CD4-positive, alpha-beta memory T cell (primary cell): ENCODE measurements at regions of chr5 and their contacts with region 1.

Region 1: DNA sequence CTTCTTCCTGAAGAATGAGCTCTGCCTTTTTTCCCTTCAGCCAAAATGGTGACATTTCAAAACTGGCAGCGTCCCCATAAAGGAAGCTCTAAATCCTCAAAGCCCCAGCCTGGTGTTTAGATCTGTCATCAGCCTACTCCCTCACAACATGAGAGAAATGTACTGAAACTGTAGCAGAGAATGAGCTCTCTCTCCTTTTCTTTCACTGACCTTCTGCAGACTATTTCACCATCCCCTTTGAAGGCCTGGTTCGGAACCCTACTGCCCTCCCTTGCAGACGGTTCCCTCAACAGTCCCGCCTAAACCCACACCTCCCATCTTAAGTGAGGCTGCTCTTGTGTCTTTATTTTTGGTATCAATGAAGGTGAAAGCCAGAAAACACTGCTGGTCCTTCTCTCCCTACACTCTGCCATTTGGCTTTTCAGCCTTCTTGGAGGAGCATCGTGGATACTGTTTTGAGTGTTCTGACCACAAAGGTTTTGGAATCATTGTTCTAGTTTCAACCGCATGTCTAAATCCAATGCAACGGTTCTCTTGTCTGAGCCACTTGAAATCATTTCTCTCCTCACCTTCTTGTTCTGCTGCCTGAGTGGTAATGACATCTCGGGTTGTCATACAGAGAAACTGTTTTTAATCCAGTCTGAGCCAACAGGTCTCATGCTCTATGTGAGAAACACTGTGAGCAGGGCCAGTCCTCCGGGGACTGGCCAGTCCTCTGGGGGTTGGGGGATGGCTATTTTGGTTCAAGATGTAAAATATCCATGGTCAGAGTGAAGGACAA is 39.0 kb downstream of the ITK start:
- DNase-seq: no peak
- H3K4me3 ChIP-seq: no peak overlapping the region
- H3K4me3 Mint-ChIP-seq: peak overlapping the region in 7 of 8 donors; percentile 57 to 76 (median 67)
- H3K27ac ChIP-seq: peak overlapping the region; percentile 44
- H3K27ac Mint-ChIP-seq: peak overlapping the region; percentile 87 to 96 (median 93)
- H3K4me1 ChIP-seq: peaks cover 98% of the 10 kb centered on the region
- H3K4me1 Mint-ChIP-seq: peaks cover 71 to 85% (median 81%) of the 10 kb centered on the region in 4 donors
- H3K27me3 ChIP-seq: no peaks in the 10 kb centered on the region
- H3K27me3 Mint-ChIP-seq: no peaks in the 10 kb centered on the region

Region 2: GRCh38 chr5:157159209-157159751 is 60.4 kb before region 1 on chr5:
- CTCF ChIA-PET with region 1: no interaction called
- POLR2A ChIA-PET with region 1: interaction called, 12 read pairs
- intact Hi-C with region 1: no loop called
- DNase-seq: peak; percentile 74 to 87 (median 81)
- H3K4me3 ChIP-seq: peak overlapping the region in 1 of 2 donors; percentile 31
- H3K4me3 Mint-ChIP-seq: peak overlapping the region in 7 of 8 donors; percentile 51 to 75 (median 65)
- H3K27ac ChIP-seq: peak overlapping the region; percentile 88
- H3K27ac Mint-ChIP-seq: peak overlapping the region; percentile 91 to 99 (median 98)
- H3K4me1 ChIP-seq: peaks cover 74% of the 10 kb centered on the region
- H3K4me1 Mint-ChIP-seq: peaks cover 57 to 91% (median 73%) of the 10 kb centered on the region in 4 donors
- H3K27me3 ChIP-seq: no peaks in the 10 kb centered on the region
- H3K27me3 Mint-ChIP-seq: no peaks in the 10 kb centered on the region

Region 3: DNA sequence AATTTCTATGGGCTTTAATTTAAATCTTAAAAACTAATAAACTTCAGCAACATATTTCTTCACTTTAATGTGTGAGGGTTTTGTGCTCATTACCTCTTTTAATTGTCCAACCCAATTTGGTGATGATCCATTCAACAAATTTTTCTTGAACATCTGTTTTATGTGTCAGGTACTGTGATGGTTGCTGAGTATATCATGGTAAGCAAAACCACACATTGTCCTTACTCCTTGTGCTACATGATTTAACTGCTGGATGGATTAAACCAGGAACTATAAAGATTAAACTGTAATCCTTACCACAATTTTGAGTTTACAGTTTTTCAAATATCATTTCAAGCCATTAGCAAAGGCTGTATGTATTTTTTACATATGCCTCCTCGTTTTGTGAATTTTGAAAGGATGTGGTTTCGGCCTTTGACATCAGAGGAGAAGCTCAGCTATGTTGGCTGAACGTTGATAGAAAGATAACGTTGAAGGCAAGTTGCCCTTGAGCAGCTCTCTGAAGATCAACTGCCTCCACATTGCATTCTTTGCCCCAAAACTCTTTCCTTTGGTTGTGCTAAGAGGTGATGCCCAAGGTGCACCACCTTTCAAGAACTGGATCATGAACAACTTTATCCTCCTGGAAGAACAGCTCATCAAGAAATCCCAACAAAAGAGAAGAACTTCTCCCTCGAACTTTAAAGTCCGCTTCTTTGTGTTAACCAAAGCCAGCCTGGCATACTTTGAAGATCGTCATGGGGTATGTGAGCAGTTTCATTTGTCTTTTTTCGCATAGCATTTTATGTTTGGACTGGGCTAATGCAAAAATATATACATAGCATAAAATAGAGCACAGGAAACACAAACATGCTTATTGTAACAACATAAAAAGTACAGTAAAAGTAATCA is 39.1 kb before region 1 on chr5 and contains the start of gene ITK:
- CTCF ChIA-PET with region 1: interaction called, 33 read pairs
- POLR2A ChIA-PET with region 1: interaction called, 1,020 read pairs
- intact Hi-C with region 1: loop called (anchors 1 kb)
- DNase-seq: peak; percentile 77 to 85 (median 81)
- H3K4me3 ChIP-seq: peak within 1 kb of the TSS; percentile 83 to 99
- H3K4me3 Mint-ChIP-seq: peak within 1 kb of the TSS; percentile 97 to 100 (median 99)
- H3K27ac ChIP-seq: peak within 1 kb of the TSS; percentile 77
- H3K27ac Mint-ChIP-seq: peak within 1 kb of the TSS; percentile 84 to 99 (median 97)
- H3K4me1 ChIP-seq: peaks cover 47% of the 10 kb centered on the region
- H3K4me1 Mint-ChIP-seq: peaks cover 28 to 67% (median 43%) of the 10 kb centered on the region in 4 donors
- H3K27me3 ChIP-seq: no peaks in the 10 kb centered on the region
- H3K27me3 Mint-ChIP-seq: no peaks in the 10 kb centered on the region
- total RNA-seq, gene ITK: 398 to 421 TPM

Region 4: DNA sequence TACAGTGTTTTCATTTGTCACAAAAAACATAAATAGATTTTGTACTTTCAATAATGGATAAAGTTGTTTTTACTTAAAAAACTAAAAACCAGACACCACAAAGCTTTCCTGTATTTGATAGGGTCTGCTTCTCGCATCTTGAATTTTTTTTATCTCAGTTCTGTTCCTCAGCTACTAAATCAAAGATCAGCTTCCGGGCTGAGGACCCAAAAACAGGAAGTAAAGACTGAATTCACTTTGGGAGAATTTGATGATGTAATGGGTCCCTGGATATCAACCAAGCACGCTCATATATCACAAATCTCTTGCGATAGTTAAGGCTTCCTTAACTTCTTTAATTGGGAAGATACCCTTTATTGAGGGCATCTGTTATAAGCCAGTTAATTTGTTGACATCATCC is 14.9 kb before region 1 on chr5:
- CTCF ChIA-PET with region 1: interaction called, 11 read pairs
- POLR2A ChIA-PET with region 1: interaction called, 1,020 read pairs
- intact Hi-C with region 1: loop called (anchors 1 kb)
- DNase-seq: peak in 3 of 5 donors; percentile 44 to 74 (median 57)
- H3K4me3 ChIP-seq: no peak overlapping the region
- H3K4me3 Mint-ChIP-seq: peak overlapping the region; percentile 42 to 96 (median 74)
- H3K27ac ChIP-seq: peak overlapping the region; percentile 55
- H3K27ac Mint-ChIP-seq: peak overlapping the region; percentile 81 to 94 (median 87)
- H3K4me1 ChIP-seq: peaks cover 99% of the 10 kb centered on the region
- H3K4me1 Mint-ChIP-seq: peaks cover 60 to 96% (median 81%) of the 10 kb centered on the region in 4 donors
- H3K27me3 ChIP-seq: no peaks in the 10 kb centered on the region
- H3K27me3 Mint-ChIP-seq: no peaks in the 10 kb centered on the region

Region 5: GRCh38 chr5:157245477-157245876 is 25.8 kb after region 1 on chr5:
- CTCF ChIA-PET with region 1: interaction called, 3 read pairs
- POLR2A ChIA-PET with region 1: interaction called, 23 read pairs
- intact Hi-C with region 1: loop called (anchors 5 kb)
- DNase-seq: no peak
- H3K4me3 ChIP-seq: no peak overlapping the region
- H3K4me3 Mint-ChIP-seq: peak overlapping the region in 2 of 8 donors; percentile 17
- H3K27ac ChIP-seq: peak overlapping the region; percentile 1
- H3K27ac Mint-ChIP-seq: peak overlapping the region; percentile 43 to 95 (median 76)
- H3K4me1 ChIP-seq: peaks cover 90% of the 10 kb centered on the region
- H3K4me1 Mint-ChIP-seq: peaks cover 55 to 84% (median 68%) of the 10 kb centered on the region in 4 donors
- H3K27me3 ChIP-seq: no peaks in the 10 kb centered on the region
- H3K27me3 Mint-ChIP-seq: no peaks in the 10 kb centered on the region